Heart left ventricle (tissue), 16 donors: ENCODE measurements at regions of chr5 and their contacts with region 1.

Region 1: GRCh38 chr5:38916802-38917201 is 71.0 kb downstream of the OSMR start:
- DNase-seq: no peak
- ATAC-seq: no peak
- H3K4me3 ChIP-seq: no peak overlapping the region
- H3K27ac ChIP-seq: no peak overlapping the region
- H3K4me1 ChIP-seq: no peaks in the 10 kb centered on the region
- H3K27me3 ChIP-seq: no peaks in the 10 kb centered on the region
- CTCF ChIP-seq: no peak
- POLR2A ChIP-seq: no peak

Region 2: GRCh38 chr5:38831909-38832308 is 84.9 kb before region 1 on chr5:
- intact Hi-C with region 1: loop called in 8 of 10 experiments (anchors 2 to 10 kb)
- DNase-seq: no peak
- ATAC-seq: peak in 2 of 4 donors; percentile 26 to 53
- H3K4me3 ChIP-seq: no peak overlapping the region
- H3K27ac ChIP-seq: no peak overlapping the region
- H3K4me1 ChIP-seq: peaks cover 0 to 23% (median 12%) of the 10 kb centered on the region in 12 donors
- H3K27me3 ChIP-seq: no peaks in the 10 kb centered on the region
- CTCF ChIP-seq: peak in 10 of 12 donors; percentile 13 to 54 (median 40)
- POLR2A ChIP-seq: no peak

Region 3: DNA sequence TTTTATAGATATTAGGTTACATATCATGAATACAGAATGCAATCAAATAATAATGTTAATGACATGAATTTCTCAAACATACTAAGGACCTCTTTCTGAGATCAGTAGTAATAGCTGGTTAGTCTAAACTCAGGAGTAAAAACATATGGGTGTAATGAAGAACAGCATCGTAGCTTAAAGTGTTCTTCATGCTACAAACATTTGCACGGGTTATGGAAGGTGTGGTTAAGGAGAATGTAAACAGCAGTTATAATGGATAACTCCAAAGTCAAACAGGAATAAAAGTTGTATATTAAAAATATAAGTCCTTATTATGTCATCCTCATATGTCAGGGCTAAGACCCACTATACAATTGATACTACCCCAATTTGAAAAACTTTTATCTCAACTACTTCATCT is 44.9 kb after region 1 on chr5:
- intact Hi-C with region 1: no loop called
- DNase-seq: no peak
- ATAC-seq: no peak
- H3K4me3 ChIP-seq: no peak overlapping the region
- H3K27ac ChIP-seq: no peak overlapping the region
- H3K4me1 ChIP-seq: no peaks in the 10 kb centered on the region
- H3K27me3 ChIP-seq: no peaks in the 10 kb centered on the region
- CTCF ChIP-seq: no peak
- POLR2A ChIP-seq: no peak